Posterior cingulate gyrus (tissue), 11 donors: ENCODE measurements at regions of chr5 and their contacts with region 1.

Region 1: DNA sequence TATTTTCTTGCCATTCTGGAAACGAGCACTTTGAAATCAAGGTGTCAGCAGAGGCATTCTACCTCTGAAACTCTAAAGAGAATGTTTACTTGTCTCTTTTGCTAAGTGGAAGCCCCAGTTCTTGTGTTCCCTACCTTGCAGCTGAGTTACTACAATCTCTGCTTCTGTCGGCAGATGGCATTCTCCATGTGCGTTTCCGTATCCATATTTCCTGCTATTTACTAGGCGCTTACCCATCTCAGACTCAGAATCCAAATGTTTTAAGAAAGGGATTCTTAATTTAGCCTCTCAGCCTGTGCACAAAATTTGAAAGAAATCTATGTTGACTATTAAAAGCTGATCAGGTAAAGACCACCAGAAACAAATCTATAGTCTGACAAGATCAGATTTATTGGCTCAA is 221.3 kb upstream of the FTMT start:
- DNase-seq: peak in 2 of 10 donors; percentile 13 to 67

Region 2: GRCh38 chr5:121867401-121867800 is 237.0 kb after region 1 on chr5:
- intact Hi-C with region 1: loop called (anchors 10 kb)
- DNase-seq: no peak